GM10248 (cell line): ENCODE measurements at regions of chr1 and their contacts with region 1.

Region 1: GRCh38 chr1:150259758-150260669 is 2.4 kb downstream of the CA14 start:
- DNase-seq: no peak
- CTCF ChIP-seq: no peak

Region 2: GRCh38 chr1:150089846-150090520 is 170.0 kb before region 1 on chr1:
- CTCF ChIA-PET with region 1: no interaction called
- POLR2A ChIA-PET with region 1: no interaction called
- DNase-seq: peak; percentile 26
- CTCF ChIP-seq: no peak

Region 3: DNA sequence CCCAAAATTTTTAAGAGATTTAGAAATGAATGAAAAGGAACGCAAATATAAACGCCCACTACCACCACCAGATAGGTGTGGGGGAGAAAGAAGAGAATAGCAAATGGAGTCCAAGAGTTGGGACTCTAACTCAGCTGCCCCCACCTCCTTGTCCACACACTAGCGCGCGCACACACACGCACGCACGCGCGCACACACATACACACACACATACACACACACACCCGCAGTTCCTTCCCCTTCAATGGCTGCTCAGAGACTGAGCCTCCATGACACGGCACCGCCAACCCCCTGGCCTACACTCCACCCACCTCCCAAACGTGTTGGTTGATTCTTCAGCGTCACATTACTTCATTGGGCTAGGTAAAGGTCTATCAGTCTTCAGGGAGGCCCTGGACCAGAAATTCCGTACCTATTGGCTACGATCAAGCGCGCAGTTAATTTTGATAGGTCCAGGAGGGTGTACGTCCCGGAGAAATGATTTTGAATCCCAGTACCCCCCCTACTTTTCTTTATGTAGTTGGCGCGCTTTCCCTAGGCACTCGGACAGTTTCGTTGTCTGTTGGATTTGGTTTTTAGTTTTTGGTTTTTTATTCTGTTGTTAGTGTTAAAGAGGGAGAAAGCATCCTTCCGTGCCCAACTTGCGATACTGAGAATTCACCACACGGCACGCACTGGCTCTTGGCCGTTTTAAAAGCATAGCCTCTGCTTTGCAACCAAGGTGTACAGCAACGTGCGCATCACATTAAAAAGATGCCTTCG is 24.0 kb before region 1 on chr1 and contains the start of gene ANP32E:
- CTCF ChIA-PET with region 1: interaction called, 12 read pairs
- POLR2A ChIA-PET with region 1: no interaction called
- DNase-seq: peak; percentile 97
- CTCF ChIP-seq: no peak

Region 4: DNA sequence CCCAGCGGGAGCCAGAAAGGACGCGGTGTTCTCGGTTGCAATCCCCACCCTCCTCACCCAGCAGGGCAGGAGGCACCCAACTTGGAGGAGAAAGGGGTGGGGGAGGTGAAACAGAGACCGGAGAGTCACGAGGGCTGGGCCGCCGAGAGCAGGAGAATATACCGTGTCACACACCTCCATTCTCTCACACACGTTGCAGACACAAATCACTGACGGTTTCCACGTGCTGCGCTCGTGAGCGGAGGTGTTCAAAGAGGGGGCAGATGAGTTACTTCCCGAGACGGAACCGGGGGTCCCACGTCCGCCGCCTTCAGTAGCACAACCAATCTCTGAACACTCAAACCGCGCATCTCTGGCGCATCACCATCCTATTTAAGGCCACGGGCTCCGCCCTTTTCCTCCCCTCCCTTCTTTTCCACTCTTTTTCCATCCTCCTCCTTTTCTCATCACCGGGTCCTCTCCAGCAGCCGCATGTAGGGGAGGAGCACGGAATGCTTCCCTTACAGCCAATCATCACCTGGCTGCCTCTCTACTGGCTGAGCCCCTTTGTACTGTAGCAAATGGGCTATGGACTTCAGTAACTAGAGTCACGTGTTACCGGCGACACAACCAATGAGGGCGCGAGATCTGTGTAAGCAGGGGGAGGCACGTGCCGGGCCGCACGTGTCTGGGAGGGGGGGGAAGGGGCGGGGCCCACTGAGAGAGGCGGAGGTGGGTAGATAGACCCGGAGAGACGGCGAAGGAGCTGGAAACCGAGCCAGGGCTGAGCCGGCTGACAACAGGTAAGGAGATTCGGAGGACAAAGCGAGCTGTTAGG is 22.0 kb after region 1 on chr1 and contains the start of gene CIART:
- CTCF ChIA-PET with region 1: interaction called, 72 read pairs
- POLR2A ChIA-PET with region 1: no interaction called
- DNase-seq: peak; percentile 80
- CTCF ChIP-seq: no peak

Region 5: GRCh38 chr1:150529017-150529416 is 269.0 kb after region 1 on chr1:
- CTCF ChIA-PET with region 1: interaction called, 15 read pairs
- POLR2A ChIA-PET with region 1: no interaction called
- DNase-seq: no peak
- CTCF ChIP-seq: no peak

Region 6: DNA sequence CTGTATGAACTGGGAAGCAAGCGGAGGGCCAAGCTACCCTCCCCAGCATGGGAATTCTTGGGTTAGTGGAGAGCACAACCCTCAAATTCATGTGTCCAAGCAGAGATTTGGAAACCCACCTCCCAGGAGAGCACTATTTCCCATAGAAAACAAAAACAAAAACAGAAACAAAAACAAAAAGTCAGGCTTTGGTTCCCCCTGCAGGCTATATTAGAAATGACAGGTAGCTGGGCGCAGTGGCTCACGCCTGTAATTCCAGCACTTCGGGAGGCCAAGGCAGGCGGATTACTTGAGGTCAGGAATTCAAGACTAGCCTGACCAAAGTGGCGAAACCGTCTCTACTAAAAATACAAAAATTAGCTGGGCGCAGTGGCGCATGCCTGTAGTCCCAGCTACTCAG is 735.9 kb after region 1 on chr1:
- CTCF ChIA-PET with region 1: interaction called, 25 read pairs
- POLR2A ChIA-PET with region 1: no interaction called
- DNase-seq: no peak
- CTCF ChIP-seq: peak; percentile 73